A549 (cell line): ENCODE measurements at regions of chr18 and their contacts with region 1.

Region 1: DNA sequence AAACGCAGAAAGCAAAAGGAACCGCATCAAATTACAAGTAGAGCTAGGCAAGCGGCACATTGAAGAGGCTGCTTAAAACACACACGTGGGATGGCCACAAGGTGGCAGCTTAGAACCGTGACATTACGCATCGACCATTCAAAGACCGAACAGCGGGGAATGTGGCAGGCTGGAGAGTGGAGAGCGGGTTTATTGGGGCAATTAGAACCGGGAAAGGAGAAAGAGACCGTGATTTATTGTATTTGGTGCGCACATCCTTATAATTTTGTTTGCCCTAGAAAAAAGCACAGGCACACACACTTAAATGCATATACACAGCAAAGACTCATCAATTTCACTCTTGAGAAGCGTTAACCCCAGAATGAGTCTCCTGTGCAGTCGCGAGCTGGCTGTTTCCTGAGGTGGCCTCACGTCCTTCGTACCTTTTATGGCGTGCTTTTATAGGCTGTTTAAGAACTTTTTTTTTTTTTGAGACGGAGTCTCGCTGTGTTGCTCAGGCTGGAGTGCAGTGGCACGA is 31.7 kb upstream of the MEP1B start:
- DNase-seq: peak; percentile 40 to 81
- ATAC-seq: peak; percentile 99
- H3K4me3 ChIP-seq: no peak overlapping the region
- H3K27ac ChIP-seq: no peak overlapping the region
- H3K4me1 ChIP-seq: no peaks in the 10 kb centered on the region
- CTCF ChIP-seq: peak; percentile 72
- EP300 ChIP-seq: no peak
- POLR2A ChIP-seq: no peak
- RAD21 ChIP-seq: peak; percentile 84 to 86

Region 2: GRCh38 chr18:31146809-31147208 is 1011.4 kb before region 1 on chr18:
- CTCF ChIA-PET with region 1: no interaction called
- POLR2A ChIA-PET with region 1: no interaction called
- DNase-seq: no peak
- ATAC-seq: no peak
- H3K4me3 ChIP-seq: no peak overlapping the region
- H3K27ac ChIP-seq: no peak overlapping the region
- H3K4me1 ChIP-seq: no peaks in the 10 kb centered on the region
- CTCF ChIP-seq: no peak
- EP300 ChIP-seq: no peak
- POLR2A ChIP-seq: no peak
- RAD21 ChIP-seq: no peak

Region 3: DNA sequence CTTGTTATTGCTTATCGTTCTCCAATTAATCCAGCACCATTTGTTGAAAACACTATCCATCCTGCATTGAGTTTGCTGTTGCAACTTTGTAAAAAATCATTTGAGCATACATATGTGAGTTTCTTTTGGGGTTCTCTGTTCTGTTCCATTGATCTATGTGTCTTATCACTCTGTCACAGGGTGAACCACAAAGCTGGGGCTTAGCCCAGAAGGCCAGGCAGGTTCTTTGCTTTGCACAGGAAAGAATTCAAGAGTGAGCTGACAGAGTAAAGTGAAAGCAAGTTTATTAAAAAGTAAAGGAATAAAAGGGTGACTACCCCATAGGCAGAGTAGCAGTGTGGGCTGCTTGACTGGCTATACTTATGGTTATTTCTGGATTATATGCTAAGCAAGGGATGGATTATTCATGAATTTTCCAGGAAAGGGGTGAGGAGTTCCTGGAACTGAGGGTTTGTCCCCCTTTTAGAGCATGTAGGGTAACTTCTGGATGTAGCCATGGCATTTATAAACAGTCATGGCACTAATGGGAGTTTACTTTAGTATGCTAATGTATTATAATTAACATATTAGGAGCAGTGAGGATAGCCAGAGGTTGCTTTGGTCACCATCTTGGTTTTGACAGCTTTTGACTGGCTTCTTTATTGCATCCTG is 19.7 kb before region 1 on chr18:
- CTCF ChIA-PET with region 1: interaction called, 10 read pairs
- POLR2A ChIA-PET with region 1: no interaction called
- DNase-seq: no peak
- ATAC-seq: no peak
- H3K4me3 ChIP-seq: no peak overlapping the region
- H3K27ac ChIP-seq: no peak overlapping the region
- H3K4me1 ChIP-seq: no peaks in the 10 kb centered on the region
- CTCF ChIP-seq: no peak
- EP300 ChIP-seq: no peak
- POLR2A ChIP-seq: no peak
- RAD21 ChIP-seq: no peak

Region 4: DNA sequence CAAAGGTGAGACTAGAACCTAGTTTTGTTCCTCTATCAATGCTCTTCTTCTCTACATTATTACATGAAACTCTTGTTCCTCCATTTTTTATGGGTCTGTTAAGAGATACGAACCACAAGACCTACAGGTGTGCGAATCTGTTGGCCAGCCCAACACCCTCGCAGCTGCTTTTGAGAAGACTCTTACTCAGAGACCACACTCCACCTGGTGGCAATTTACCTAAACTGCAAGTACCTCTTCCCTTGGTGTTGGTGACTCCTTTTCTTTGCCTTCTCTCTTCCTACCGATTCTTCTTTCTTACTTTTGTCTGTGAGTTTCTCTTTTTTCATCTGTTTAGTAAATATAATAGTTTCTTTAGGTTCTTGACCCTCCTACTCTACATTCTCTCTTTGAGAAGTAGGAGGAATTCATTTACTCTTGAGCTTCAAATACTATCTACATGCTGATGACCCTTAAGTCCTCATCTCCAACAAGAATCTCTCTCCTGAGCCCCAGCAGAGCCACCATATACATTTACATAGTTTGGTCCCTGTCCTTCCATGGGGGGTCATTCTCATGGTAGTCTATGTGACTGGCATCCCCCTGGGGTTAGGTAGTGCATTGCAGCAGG is 394.4 kb after region 1 on chr18:
- CTCF ChIA-PET with region 1: interaction called, 165 read pairs
- POLR2A ChIA-PET with region 1: no interaction called
- DNase-seq: peak; percentile 34 to 70
- ATAC-seq: peak; percentile 70 to 84; a peak in 5 of 6 replicates
- H3K4me3 ChIP-seq: no peak overlapping the region
- H3K27ac ChIP-seq: no peak overlapping the region
- H3K4me1 ChIP-seq: no peaks in the 10 kb centered on the region
- CTCF ChIP-seq: peak; percentile 55
- EP300 ChIP-seq: no peak
- POLR2A ChIP-seq: no peak
- RAD21 ChIP-seq: peak; percentile 58 to 61; a peak in 4 of 5 replicates